Activated T-helper 1 cell treated with anti-CD3 and anti-CD28 coated beads, Interleukin-12 subunit alpha, Interleukin-12 subunit beta, Interleukin-2, Interleukin-4 antibody, amounts not matched to agents 30 ng/mL and 10 ng/mL and 1 ng/mL, durations not matched to agents 14 hours and 24 hours and 36 hours (primary cell): ENCODE measurements at regions of chr4 and their contacts with region 1.

Region 1: GRCh38 chr4:10722957-10723356 is 38.4 kb upstream of the CLNK start:
- DNase-seq: no peak
- H3K4me3 Mint-ChIP-seq: peak overlapping the region; percentile 47
- H3K27ac Mint-ChIP-seq: peak overlapping the region; percentile 73
- H3K4me1 Mint-ChIP-seq: peaks cover 76% of the 10 kb centered on the region
- H3K27me3 Mint-ChIP-seq: peaks cover under 1% of the 10 kb centered on the region

Region 2: GRCh38 chr4:10671366-10671765 is 51.6 kb before region 1 on chr4:
- intact Hi-C with region 1: loop called (anchors 2 kb)
- DNase-seq: peak; percentile 42
- H3K4me3 Mint-ChIP-seq: peak overlapping the region; percentile 40
- H3K27ac Mint-ChIP-seq: peak overlapping the region; percentile 78
- H3K4me1 Mint-ChIP-seq: peaks cover 35% of the 10 kb centered on the region
- H3K27me3 Mint-ChIP-seq: no peaks in the 10 kb centered on the region

Region 3: DNA sequence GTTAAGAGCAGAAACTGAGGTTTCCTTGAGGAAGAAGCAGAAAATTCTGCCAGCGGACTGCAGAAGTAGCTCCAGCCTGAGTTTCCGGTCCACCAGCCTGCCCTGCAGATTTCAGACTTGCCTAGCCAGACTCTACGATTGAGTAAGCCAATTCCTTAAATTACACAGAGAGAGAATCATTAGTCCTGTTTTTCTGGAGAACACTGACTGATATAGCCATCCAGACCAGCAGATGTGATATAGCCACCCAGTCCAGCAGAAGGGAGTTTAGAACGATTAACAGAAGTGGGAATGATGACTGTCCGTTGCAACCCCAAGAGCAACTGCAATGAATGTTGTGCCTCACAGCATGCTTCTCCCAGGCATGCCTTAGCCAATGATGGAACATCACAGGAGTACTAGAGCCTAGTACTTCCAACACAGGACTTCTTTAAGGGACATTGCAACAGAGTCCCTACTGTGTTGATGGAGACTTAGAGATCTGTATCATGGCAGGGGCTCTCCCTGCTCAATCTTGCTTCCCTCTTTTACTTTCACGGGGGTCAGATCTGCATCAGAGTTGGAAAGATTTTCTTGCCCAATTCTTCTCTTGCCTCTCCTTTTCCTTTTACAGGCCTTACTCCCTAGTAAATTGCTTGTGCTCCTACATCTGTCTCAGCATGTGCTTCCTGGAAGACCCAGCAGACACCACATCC is 226.2 kb after region 1 on chr4:
- intact Hi-C with region 1: loop called (anchors 2 kb)
- DNase-seq: no peak
- H3K4me3 Mint-ChIP-seq: no peak overlapping the region
- H3K27ac Mint-ChIP-seq: no peak overlapping the region
- H3K4me1 Mint-ChIP-seq: peaks cover 12% of the 10 kb centered on the region
- H3K27me3 Mint-ChIP-seq: peaks cover 8% of the 10 kb centered on the region